PC-3 (cell line): ENCODE measurements at regions of chr3 and their contacts with region 1.

Region 1: GRCh38 chr3:130963878-130964277 is 62.7 kb downstream of the ASTE1 start:
- DNase-seq: peak; percentile 93
- ATAC-seq: peak; percentile 98
- H3K4me3 ChIP-seq: peak overlapping the region; percentile 33; the same call in 1 of the 2 replicates
- H3K27ac ChIP-seq: peak overlapping the region; percentile 98
- H3K4me1 ChIP-seq: peaks cover 22% of the 10 kb centered on the region
- H3K27me3 ChIP-seq: no peaks in the 10 kb centered on the region
- CTCF ChIP-seq: no peak

Region 2: DNA sequence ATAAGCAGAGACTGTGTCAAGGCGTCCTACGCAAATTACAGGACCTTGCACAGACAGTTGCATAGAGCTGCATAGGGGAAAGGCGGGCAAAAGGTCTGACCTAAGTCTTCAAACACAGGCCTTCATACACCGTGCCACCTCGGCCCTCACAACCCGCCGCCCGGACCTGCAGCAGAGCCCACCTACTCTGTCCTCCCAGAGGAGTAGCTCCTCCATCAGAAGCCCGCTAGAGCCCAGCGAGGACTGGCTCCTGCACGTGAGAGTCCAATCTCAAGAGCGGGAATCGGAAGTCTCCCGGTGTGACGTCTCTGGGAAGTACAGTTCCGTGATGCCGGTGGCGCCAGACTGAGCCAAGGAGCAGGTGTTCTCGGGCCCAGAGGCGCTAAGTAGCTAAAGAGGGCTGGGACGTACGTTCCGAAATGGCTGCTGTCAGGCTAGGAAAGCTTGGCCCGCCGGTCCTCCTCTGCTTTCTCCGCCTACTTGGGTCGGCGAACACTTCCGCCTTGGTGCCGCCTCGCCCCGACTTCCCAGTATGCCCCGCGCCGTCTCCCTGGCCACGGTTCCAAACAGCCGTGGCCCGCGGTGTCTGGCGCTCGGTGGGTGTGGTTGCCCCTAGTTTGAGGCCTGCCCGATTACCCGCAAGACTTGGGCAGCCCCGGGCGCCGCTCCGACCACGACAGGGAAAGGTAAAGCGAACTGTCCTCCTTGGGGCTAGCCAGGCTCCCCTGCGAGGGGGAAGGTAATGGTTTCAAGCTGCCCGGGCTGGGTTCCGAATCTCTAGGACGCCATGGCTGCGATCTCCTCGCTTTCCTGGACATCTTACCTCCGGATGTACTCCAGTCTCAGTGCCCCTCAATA is 62.7 kb after region 1 on chr3 and contains the starts of genes ASTE1 and NEK11:
- CTCF ChIA-PET with region 1: no interaction called
- POLR2A ChIA-PET with region 1: no interaction called
- intact Hi-C with region 1: loop called (anchors 5 kb)
- DNase-seq: peak; percentile 81
- ATAC-seq: peak; percentile 97
- H3K4me3 ChIP-seq: peak within 1 kb of the TSS; percentile 87
- H3K27ac ChIP-seq: peak within 1 kb of the TSS; percentile 67
- H3K4me1 ChIP-seq: peaks cover 18% of the 10 kb centered on the region
- H3K27me3 ChIP-seq: no peaks in the 10 kb centered on the region
- CTCF ChIP-seq: no peak
- total RNA-seq, gene ASTE1: 2.8 and 2.9 TPM in 2 replicates
- total RNA-seq, gene NEK11: 3.1 and 5.8 TPM in 2 replicates